AG04449 (cell line): ENCODE measurements at regions of chr21 and their contacts with region 1.

Region 1: GRCh38 chr21:44478124-44478800 is 23.0 kb downstream of the LRRC3 start:
- DNase-seq: no peak
- H3K4me3 ChIP-seq: no peak overlapping the region
- CTCF ChIP-seq: no peak

Region 2: DNA sequence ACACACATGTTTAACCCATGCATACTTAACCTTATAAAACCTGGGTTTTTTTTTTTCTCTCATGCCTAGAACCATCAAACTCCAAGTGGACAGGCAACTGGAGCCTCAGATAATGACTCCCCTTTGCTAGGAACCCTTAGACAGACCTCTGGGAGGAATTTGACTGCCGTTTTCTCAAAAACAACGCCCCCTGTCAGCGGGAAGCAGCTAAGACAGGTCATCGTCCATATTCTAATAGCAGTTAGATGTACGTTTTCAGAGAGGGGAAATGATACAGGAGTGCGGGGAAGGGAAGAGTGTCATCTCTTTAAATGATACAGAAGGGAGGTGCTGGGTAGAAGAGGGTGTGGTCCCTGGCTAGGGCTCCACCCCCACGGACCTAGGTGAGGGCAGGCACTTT is 11.7 kb after region 1 on chr21:
- CTCF ChIA-PET with region 1: interaction called, 12 read pairs
- POLR2A ChIA-PET with region 1: no interaction called
- DNase-seq: no peak
- H3K4me3 ChIP-seq: no peak overlapping the region
- CTCF ChIP-seq: no peak